ENCODE measurements at regions of chr20 and their contacts with region 1.

Region 1: GRCh38 chr20:62921119-62921687 is 5.1 kb downstream of the DIDO1 start:
- DNase-seq: no peak
- ATAC-seq: peak; percentile 65
- H3K4me3 ChIP-seq: peak overlapping the region; percentile 18; the same call in 1 of the 2 replicates
- H3K27ac ChIP-seq: no peak overlapping the region
- H3K4me1 ChIP-seq: peaks cover 52% of the 10 kb centered on the region
- H3K27me3 ChIP-seq: no peaks in the 10 kb centered on the region
- CTCF ChIP-seq: peak; percentile 53 to 77 (median 54); a peak in 5 of 6 replicates
- EP300 ChIP-seq: no peak
- POLR2A ChIP-seq: no peak
- RAD21 ChIP-seq: 0 out of 2 replicates have a peak, but pooled peaks have one; percentile 26

Region 2: GRCh38 chr20:62907384-62908317 is 13.6 kb before region 1 on chr20:
- CTCF ChIA-PET with region 1: interaction called, 92 read pairs
- POLR2A ChIA-PET with region 1: interaction called, 3 read pairs
- RAD21 ChIA-PET with region 1: interaction called, 6 read pairs
- SMC1A ChIA-PET with region 1: interaction called, 20 read pairs
- in situ Hi-C with region 1: no loop called
- intact Hi-C with region 1: no loop called
- DNase-seq: no peak
- ATAC-seq: peak; percentile 87
- H3K4me3 ChIP-seq: no peak overlapping the region
- H3K27ac ChIP-seq: no peak overlapping the region
- H3K4me1 ChIP-seq: no peaks in the 10 kb centered on the region
- H3K27me3 ChIP-seq: no peaks in the 10 kb centered on the region
- CTCF ChIP-seq: peak; percentile 24 to 72 (median 64)
- EP300 ChIP-seq: no peak
- POLR2A ChIP-seq: 0 out of 2 replicates have a peak, but pooled peaks have one; percentile 1
- RAD21 ChIP-seq: peak; percentile 35; the same call in 1 of the 2 replicates

Region 3: DNA sequence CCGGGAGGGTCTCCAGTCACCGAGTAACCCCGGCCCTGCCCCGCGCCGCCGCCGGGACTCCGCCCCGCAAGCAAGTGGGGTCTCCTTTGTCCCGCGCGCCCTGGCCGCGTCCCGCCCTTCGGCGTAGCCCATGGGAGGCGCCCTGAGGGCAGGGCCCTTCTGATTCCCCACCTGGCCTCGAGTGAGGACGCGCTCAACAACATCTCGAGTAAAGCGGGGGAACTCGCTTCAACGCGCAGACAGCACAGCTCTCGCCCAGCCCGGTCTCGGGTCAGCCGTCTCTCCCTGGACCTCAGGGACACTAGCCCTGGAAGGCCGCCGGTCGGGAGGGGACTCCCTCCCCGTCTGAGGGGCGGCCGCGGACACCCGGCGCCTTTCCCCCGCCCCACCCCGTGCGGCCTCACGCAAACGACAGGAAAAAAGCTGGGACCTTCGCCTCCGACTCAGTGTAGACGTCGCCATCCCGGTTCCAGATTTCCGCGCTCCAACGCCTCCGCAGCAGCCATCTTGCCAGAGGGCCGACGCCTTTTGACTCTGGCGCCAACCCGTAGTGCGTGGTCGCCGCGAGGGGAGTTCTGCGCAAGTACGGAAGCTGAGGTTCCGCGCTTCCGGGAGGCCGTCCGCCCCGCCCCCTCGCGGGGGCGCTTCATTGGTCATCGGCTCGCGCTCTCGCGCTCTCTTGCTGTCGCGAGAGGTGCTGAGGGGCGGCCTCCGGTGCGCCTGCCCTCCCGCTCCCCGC is 16.3 kb after region 1 on chr20:
- CTCF ChIA-PET with region 1: interaction called, 14 read pairs
- POLR2A ChIA-PET with region 1: interaction called, 59 read pairs
- RAD21 ChIA-PET with region 1: interaction called, 5 read pairs
- SMC1A ChIA-PET with region 1: interaction called, 14 read pairs
- in situ Hi-C with region 1: no loop called
- intact Hi-C with region 1: no loop called
- DNase-seq: peak; percentile 82
- ATAC-seq: peak; percentile 91
- H3K4me3 ChIP-seq: peak overlapping the region; percentile 71
- H3K27ac ChIP-seq: peak overlapping the region; percentile 90
- H3K4me1 ChIP-seq: 0 out of 2 replicates have a peak, but pooled peaks cover 5% of the 10 kb centered on the region
- H3K27me3 ChIP-seq: no peaks in the 10 kb centered on the region
- CTCF ChIP-seq: no peak
- EP300 ChIP-seq: 0 out of 4 replicates have a peak, but pooled peaks of 1 of the 2 experiments have one; percentile 13
- POLR2A ChIP-seq: peak; percentile 90
- RAD21 ChIP-seq: no peak